ENCODE measurements at regions of chr13 and their contacts with region 1.

Region 1: DNA sequence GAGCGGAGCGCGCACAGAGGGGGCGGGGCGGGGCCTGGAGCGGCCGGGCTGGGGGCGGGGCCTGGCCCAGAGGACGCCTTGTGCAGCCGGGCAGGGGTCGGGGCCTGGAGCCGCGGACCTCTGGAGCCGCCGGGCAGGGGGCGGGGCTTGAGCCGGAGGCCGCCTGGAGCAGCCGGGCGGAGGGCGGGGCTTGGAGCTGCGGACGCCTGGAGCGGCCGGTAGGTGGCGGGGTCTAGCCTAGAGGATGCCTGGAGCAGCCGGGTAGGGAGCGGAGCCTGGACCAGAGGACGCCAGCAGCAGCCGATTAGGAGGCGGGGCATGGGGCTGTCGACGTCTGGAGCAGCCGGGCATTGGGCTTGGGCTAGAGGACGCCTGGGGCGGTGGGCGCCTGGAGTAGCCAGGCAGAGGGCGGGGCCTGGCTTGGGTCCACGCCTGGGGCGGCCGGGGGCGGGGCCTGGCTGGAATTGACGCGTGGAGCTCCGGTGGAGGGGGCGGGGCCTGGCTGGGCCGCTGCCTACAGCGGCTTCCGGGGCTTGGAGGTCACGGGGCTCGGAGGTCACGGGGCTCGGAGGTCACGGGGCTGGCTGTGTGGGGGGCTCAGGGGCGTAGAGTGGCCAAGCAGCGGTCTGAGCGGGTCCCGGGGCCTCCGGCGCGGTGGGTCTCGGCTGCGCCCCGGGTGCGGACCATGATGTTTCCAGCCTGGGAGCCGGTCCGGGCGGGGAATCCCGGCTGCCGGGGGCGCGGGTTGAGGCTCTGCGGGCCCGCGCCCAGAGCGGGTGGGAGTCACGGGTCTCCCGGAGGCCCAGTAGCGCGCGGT is at the start of gene ANKRD10:
- DNase-seq: peak; percentile 82 to 96 (median 90)
- ATAC-seq: peak; percentile 75
- H3K4me3 ChIP-seq: peak within 1 kb of the TSS; percentile 81
- H3K4me3 Mint-ChIP-seq: peak within 1 kb of the TSS; percentile 95
- H3K27ac ChIP-seq: peak within 1 kb of the TSS; percentile 87 to 89
- H3K27ac Mint-ChIP-seq: peak within 1 kb of the TSS; percentile 89
- H3K4me1 ChIP-seq: peaks cover 32% of the 10 kb centered on the region
- H3K4me1 Mint-ChIP-seq: peaks cover 55% of the 10 kb centered on the region
- H3K27me3 ChIP-seq: no peaks in the 10 kb centered on the region
- H3K27me3 Mint-ChIP-seq: no peaks in the 10 kb centered on the region
- CTCF ChIP-seq: peak; percentile 76
- total RNA-seq, gene ANKRD10: 75.5 to 83.8 TPM

Region 2: GRCh38 chr13:110561344-110562035 is 353.8 kb before region 1 on chr13 and contains the start of gene RAB20:
- CTCF ChIA-PET with region 1: no interaction called
- POLR2A ChIA-PET with region 1: interaction called, 8 read pairs
- intact Hi-C with region 1: loop called in 1 of 2 experiments (anchors 10 kb)
- DNase-seq: peak; percentile 22 to 79 (median 51)
- ATAC-seq: peak; percentile 60
- H3K4me3 ChIP-seq: peak within 1 kb of the TSS; percentile 72
- H3K4me3 Mint-ChIP-seq: peak within 1 kb of the TSS; percentile 100
- H3K27ac ChIP-seq: peak within 1 kb of the TSS; percentile 41 to 55
- H3K27ac Mint-ChIP-seq: peak within 1 kb of the TSS; percentile 77
- H3K4me1 ChIP-seq: peaks cover 17% of the 10 kb centered on the region
- H3K4me1 Mint-ChIP-seq: peaks cover 50% of the 10 kb centered on the region
- H3K27me3 ChIP-seq: no peaks in the 10 kb centered on the region
- H3K27me3 Mint-ChIP-seq: no peaks in the 10 kb centered on the region
- CTCF ChIP-seq: no peak
- total RNA-seq, gene RAB20: 0.89 to 1.4 TPM

Region 3: DNA sequence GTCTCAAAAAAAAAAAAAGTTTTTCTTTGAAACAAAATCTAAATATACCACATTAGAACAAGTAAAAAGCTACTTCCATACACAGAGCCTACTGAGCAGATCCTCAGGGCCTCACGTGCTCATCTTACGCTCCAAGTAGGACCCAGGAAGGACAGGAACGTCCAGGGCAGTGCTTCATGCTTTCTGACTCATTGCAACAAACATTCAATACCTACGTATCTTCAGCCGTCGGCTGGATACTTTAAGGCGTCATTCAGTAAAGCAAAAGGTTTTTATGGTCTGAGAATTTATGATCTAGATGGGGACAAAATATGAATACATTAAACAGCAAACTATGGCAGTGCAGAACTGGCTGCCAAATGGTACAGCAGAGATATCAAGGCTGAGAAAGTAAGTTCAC is 230.0 kb before region 1 on chr13:
- CTCF ChIA-PET with region 1: no interaction called
- POLR2A ChIA-PET with region 1: no interaction called
- intact Hi-C with region 1: no loop called
- DNase-seq: no peak
- ATAC-seq: no peak
- H3K4me3 ChIP-seq: no peak overlapping the region
- H3K4me3 Mint-ChIP-seq: no peak overlapping the region
- H3K27ac ChIP-seq: no peak overlapping the region
- H3K27ac Mint-ChIP-seq: no peak overlapping the region
- H3K4me1 ChIP-seq: no peaks in the 10 kb centered on the region
- H3K4me1 Mint-ChIP-seq: no peaks in the 10 kb centered on the region
- H3K27me3 ChIP-seq: no peaks in the 10 kb centered on the region
- H3K27me3 Mint-ChIP-seq: no peaks in the 10 kb centered on the region
- CTCF ChIP-seq: no peak

Region 4: GRCh38 chr13:110715395-110716235 is 199.7 kb before region 1 on chr13:
- CTCF ChIA-PET with region 1: interaction called, 6 read pairs
- POLR2A ChIA-PET with region 1: interaction called, 28 read pairs
- intact Hi-C with region 1: loop called (anchors 2 to 5 kb)
- DNase-seq: peak; percentile 88 to 100 (median 94)
- ATAC-seq: peak; percentile 57
- H3K4me3 ChIP-seq: peak overlapping the region; percentile 98
- H3K4me3 Mint-ChIP-seq: peak overlapping the region; percentile 98
- H3K27ac ChIP-seq: peak overlapping the region; percentile 64 to 89
- H3K27ac Mint-ChIP-seq: peak overlapping the region; percentile 94
- H3K4me1 ChIP-seq: peaks cover 36% of the 10 kb centered on the region
- H3K4me1 Mint-ChIP-seq: peaks cover 41% of the 10 kb centered on the region
- H3K27me3 ChIP-seq: no peaks in the 10 kb centered on the region
- H3K27me3 Mint-ChIP-seq: peaks cover 4% of the 10 kb centered on the region
- CTCF ChIP-seq: no peak

Region 5: GRCh38 chr13:111153279-111153976 is 238.2 kb after region 1 on chr13:
- CTCF ChIA-PET with region 1: no interaction called
- POLR2A ChIA-PET with region 1: no interaction called
- intact Hi-C with region 1: loop called (anchors 2 kb)
- DNase-seq: peak; percentile 82 to 95 (median 91)
- ATAC-seq: peak; percentile 85
- H3K4me3 ChIP-seq: peak overlapping the region; percentile 67
- H3K4me3 Mint-ChIP-seq: peak overlapping the region; percentile 99
- H3K27ac ChIP-seq: peak overlapping the region; percentile 50 to 62
- H3K27ac Mint-ChIP-seq: peak overlapping the region; percentile 93
- H3K4me1 ChIP-seq: peaks cover 27% of the 10 kb centered on the region
- H3K4me1 Mint-ChIP-seq: peaks cover 39% of the 10 kb centered on the region
- H3K27me3 ChIP-seq: no peaks in the 10 kb centered on the region
- H3K27me3 Mint-ChIP-seq: no peaks in the 10 kb centered on the region
- CTCF ChIP-seq: no peak

Region 6: DNA sequence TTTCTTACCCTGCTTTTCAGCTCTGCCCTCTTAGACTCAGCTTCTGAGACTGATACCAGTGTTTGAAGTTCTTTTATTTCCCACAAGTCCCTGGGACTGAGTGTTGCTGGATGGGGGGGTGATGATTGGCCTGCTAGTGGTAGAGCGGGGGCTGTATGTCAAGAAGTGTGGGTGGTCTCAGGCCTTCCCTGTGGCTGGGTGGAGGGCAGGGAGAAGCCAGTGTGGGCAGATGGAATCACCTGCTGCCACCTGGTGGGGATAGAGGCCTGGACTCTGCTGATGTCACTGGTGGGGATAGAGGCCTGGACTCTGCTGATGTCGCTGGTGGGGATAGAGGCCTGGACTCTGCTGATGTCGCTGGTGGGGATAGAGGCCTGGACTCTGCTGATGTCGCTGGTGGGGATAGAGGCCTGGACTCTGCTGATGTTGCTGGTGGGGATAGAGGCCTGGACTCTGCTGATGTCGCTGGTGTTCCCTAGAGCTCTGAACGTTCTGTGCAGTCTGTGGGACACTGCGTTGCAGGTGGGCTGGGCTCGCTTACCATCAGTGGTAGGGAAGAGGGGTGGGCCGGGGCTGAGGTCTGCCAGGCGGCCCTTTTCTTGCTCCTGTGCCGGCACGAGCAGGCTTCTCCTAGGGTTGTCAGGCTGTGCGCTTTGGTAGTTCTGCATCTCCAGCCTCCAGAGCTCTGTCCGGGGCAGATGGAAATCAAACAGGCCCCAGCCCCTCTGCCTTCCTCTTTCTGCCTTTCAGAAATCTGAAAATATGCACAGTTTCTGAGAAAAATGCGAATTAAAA is 301.1 kb after region 1 on chr13:
- CTCF ChIA-PET with region 1: interaction called, 3 read pairs
- POLR2A ChIA-PET with region 1: no interaction called
- intact Hi-C with region 1: loop called (anchors 10 kb)
- DNase-seq: peak; percentile 19 to 68 (median 38)
- ATAC-seq: peak; percentile 69
- H3K4me3 ChIP-seq: no peak overlapping the region
- H3K4me3 Mint-ChIP-seq: no peak overlapping the region
- H3K27ac ChIP-seq: no peak overlapping the region
- H3K27ac Mint-ChIP-seq: peak overlapping the region; percentile 73
- H3K4me1 ChIP-seq: peaks cover 7% of the 10 kb centered on the region
- H3K4me1 Mint-ChIP-seq: peaks cover 64% of the 10 kb centered on the region
- H3K27me3 ChIP-seq: no peaks in the 10 kb centered on the region
- H3K27me3 Mint-ChIP-seq: no peaks in the 10 kb centered on the region
- CTCF ChIP-seq: peak; percentile 65

Region 7: DNA sequence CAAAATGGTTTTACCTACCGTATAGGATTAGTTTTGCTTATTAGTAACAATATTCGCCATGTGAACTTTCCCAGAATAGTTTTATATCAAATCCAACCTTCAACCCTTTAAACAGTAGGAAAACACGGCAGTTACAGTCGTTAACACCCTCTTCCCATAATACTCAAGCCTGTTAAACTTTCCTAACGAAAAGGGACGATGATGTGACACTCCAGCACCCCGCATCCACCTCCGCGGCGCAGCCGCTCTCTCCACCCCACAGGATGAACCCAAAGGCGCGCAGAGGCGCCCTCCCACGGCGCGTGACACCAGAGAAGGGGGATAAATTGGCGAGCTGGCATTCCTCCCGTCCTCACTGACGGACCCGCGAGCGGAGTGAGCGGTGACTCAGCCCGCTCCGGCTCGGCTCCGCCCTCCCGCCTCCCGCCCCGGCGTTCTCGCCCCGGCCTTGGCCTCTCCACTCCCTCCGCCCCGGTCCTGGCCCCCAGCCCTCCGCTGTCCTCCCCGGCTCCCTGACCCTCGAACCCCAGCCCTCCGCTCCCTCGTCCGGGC is 1672.0 kb after region 1 on chr13:
- CTCF ChIA-PET with region 1: no interaction called
- POLR2A ChIA-PET with region 1: no interaction called
- intact Hi-C with region 1: loop called in 1 of 2 experiments (anchors 10 kb)
- DNase-seq: peak; percentile 13 to 84 (median 54)
- ATAC-seq: peak; percentile 64
- H3K4me3 ChIP-seq: peak overlapping the region; percentile 85
- H3K4me3 Mint-ChIP-seq: peak overlapping the region; percentile 96
- H3K27ac ChIP-seq: peak overlapping the region; percentile 46 to 75
- H3K27ac Mint-ChIP-seq: peak overlapping the region; percentile 73
- H3K4me1 ChIP-seq: peaks cover 31% of the 10 kb centered on the region
- H3K4me1 Mint-ChIP-seq: peaks cover 46% of the 10 kb centered on the region
- H3K27me3 ChIP-seq: no peaks in the 10 kb centered on the region
- H3K27me3 Mint-ChIP-seq: no peaks in the 10 kb centered on the region
- CTCF ChIP-seq: no peak

Measured in CD4-positive, alpha-beta T cell (primary cell).